MCF 10A (cell line): ENCODE measurements at regions of chr14 and their contacts with region 1.

Region 1: DNA sequence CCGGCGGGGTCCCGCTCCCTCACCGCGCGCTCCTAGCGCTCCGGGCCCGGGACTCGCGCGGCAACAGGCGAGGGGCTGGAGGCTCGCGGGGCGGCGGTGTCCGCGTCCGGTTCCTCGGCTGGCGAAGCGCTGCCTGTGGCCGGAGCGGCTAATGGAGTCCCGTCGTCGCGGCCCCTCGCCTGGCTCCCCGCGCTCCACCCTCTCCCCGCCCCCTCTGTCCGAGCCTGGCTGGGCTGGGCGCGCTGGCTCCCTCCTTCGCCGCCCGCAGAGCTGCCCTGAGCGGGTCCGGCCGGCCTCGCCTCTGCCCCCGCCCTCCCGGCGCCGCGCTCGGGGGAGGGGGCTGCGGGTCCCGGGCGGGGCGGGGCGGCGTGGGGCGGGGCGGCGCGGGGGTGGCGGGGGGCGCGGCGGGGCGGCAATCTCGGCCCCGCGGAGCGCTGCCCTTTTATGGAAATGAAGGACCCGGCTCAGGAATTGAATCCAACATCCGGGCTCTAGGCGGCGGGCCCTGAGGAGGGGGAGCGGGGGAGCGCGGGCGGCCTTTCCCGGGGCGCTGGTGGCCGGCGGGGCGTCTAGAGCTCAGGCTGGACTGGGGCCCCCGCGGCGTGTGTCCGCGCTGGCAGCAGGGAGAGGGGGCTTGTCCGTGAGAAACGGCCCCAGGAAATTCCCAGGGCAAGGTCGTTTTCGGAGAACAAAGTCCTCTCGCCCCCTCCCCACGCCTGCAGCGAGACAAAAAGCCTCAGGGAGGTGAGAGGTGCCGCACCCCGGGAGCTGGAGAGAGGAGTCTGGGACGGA is at the start of gene FERMT2:
- DNase-seq: peak; percentile 84
- H3K4me3 Mint-ChIP-seq: peak within 1 kb of the TSS; percentile 94
- H3K27ac Mint-ChIP-seq: peak within 1 kb of the TSS; percentile 90
- H3K4me1 Mint-ChIP-seq: peaks cover 16% of the 10 kb centered on the region
- H3K27me3 Mint-ChIP-seq: no peaks in the 10 kb centered on the region
- CTCF ChIP-seq: no peak
- total RNA-seq, gene FERMT2: 62.2 and 62.7 TPM in 2 replicates

Region 2: DNA sequence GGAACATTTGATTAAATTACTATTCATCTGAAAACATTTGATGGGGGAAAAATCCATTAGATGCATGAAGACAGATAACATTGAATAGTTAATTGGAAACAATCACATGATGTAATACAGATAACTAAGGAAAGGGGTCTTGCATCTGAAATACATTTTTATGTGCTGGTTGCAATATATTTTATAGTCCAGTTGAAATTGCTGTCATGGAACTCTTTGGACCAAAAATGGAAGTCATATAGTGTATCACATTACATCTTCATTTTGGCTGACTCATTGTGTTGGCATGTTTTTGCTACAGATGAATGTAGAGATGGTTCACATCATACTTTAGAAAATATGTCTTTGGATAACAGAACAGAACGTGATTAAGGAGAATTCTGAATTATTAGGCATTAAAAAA is 116.7 kb before region 1 on chr14:
- CTCF ChIA-PET with region 1: interaction called, 5 read pairs
- POLR2A ChIA-PET with region 1: interaction called, 5 read pairs
- intact Hi-C with region 1: loop called (anchors 1 kb)
- DNase-seq: peak; percentile 75
- H3K4me3 Mint-ChIP-seq: no peak overlapping the region
- H3K27ac Mint-ChIP-seq: peak overlapping the region; percentile 84
- H3K4me1 Mint-ChIP-seq: peaks cover 23% of the 10 kb centered on the region
- H3K27me3 Mint-ChIP-seq: no peaks in the 10 kb centered on the region
- CTCF ChIP-seq: no peak

Region 3: GRCh38 chr14:52900723-52901122 is 50.4 kb before region 1 on chr14:
- CTCF ChIA-PET with region 1: interaction called, 8 read pairs
- POLR2A ChIA-PET with region 1: interaction called, 14 read pairs
- intact Hi-C with region 1: no loop called
- DNase-seq: peak; percentile 33
- H3K4me3 Mint-ChIP-seq: peak overlapping the region; percentile 40
- H3K27ac Mint-ChIP-seq: peak overlapping the region; percentile 42
- H3K4me1 Mint-ChIP-seq: peaks cover 39% of the 10 kb centered on the region
- H3K27me3 Mint-ChIP-seq: no peaks in the 10 kb centered on the region
- CTCF ChIP-seq: no peak

Region 4: GRCh38 chr14:52918486-52918885 is 32.6 kb before region 1 on chr14:
- CTCF ChIA-PET with region 1: interaction called, 9 read pairs
- POLR2A ChIA-PET with region 1: interaction called, 20 read pairs
- intact Hi-C with region 1: no loop called
- DNase-seq: peak; percentile 62
- H3K4me3 Mint-ChIP-seq: no peak overlapping the region
- H3K27ac Mint-ChIP-seq: peak overlapping the region; percentile 73
- H3K4me1 Mint-ChIP-seq: peaks cover 50% of the 10 kb centered on the region
- H3K27me3 Mint-ChIP-seq: no peaks in the 10 kb centered on the region
- CTCF ChIP-seq: no peak

Region 5: DNA sequence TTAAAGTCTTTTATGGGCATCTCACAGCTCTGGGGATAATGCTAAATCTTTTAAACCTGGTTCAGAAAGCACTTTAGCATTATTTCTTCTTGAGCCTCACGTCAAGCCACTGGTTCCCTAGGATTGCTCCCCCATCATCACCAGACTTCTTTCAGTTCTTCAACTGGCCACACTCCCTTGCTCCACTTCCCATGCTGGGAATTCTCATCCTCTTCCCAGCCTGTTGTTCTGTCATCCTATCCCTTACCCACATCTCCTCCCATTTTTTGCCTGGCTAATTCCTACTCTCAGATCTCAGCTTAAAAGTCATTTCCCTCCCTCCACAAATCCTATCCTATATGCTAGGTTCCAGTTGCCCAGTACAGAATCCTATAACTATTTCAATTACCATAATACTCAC is 14.7 kb before region 1 on chr14:
- CTCF ChIA-PET with region 1: interaction called, 6 read pairs
- POLR2A ChIA-PET with region 1: interaction called, 24 read pairs
- intact Hi-C with region 1: no loop called
- DNase-seq: no peak
- H3K4me3 Mint-ChIP-seq: no peak overlapping the region
- H3K27ac Mint-ChIP-seq: no peak overlapping the region
- H3K4me1 Mint-ChIP-seq: peaks cover 32% of the 10 kb centered on the region
- H3K27me3 Mint-ChIP-seq: no peaks in the 10 kb centered on the region
- CTCF ChIP-seq: no peak